Mammary epithelial cell (primary cell): ENCODE measurements at regions of chr6 and their contacts with region 1.

Region 1: GRCh38 chr6:40912158-40912946 is 126.7 kb downstream of the UNC5CL start:
- DNase-seq: peak; percentile 87
- H3K4me3 ChIP-seq: no peak overlapping the region
- H3K27ac ChIP-seq: no peak overlapping the region
- H3K4me1 ChIP-seq: peaks cover 20% of the 10 kb centered on the region
- H3K27me3 ChIP-seq: no peaks in the 10 kb centered on the region
- CTCF ChIP-seq: peak; percentile 59 to 75

Region 2: GRCh38 chr6:40509086-40509485 is 403.3 kb before region 1 on chr6:
- CTCF ChIA-PET with region 1: no interaction called
- dilution Hi-C with region 1: no loop called
- in situ Hi-C with region 1: no loop called
- intact Hi-C with region 1: no loop called
- DNase-seq: no peak
- H3K4me3 ChIP-seq: no peak overlapping the region
- H3K27ac ChIP-seq: no peak overlapping the region
- H3K4me1 ChIP-seq: no peaks in the 10 kb centered on the region
- H3K27me3 ChIP-seq: no peaks in the 10 kb centered on the region
- CTCF ChIP-seq: no peak

Region 3: DNA sequence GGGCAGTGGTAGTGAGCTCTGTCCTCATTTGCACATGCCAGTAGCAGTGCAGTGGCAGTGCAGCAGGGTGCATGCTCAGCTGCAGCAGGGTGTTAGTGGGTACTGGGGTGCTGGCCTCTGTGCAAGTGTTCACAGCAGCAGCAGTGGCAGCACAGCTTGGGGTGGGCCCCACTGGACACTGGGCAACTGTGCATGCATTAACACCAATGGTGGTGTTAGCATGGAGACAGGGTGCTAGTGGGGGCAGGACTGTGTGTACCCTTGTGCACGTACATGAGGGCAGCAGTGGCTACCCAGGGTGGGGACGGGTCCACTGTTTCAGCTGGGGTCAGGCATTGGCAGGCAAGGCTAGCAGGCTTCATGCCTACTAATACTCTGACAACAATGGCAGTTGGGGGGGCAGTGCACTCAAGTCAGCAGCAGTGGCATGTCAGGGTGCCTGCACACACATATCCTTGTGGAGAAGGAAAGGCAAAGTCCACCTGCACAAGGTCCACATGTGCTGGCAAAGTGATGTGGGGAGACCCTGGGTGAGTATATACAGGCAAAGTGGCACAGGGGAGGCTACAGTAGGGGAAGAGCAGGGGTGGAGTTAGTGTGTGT is 66.4 kb after region 1 on chr6:
- CTCF ChIA-PET with region 1: no interaction called
- dilution Hi-C with region 1: loop called (anchors 5 kb)
- in situ Hi-C with region 1: no loop called
- intact Hi-C with region 1: no loop called
- DNase-seq: no peak
- H3K4me3 ChIP-seq: no peak overlapping the region
- H3K27ac ChIP-seq: no peak overlapping the region
- H3K4me1 ChIP-seq: no peaks in the 10 kb centered on the region
- H3K27me3 ChIP-seq: no peaks in the 10 kb centered on the region
- CTCF ChIP-seq: no peak

Region 4: GRCh38 chr6:41008011-41008410 is 95.7 kb after region 1 on chr6:
- CTCF ChIA-PET with region 1: no interaction called
- dilution Hi-C with region 1: no loop called
- in situ Hi-C with region 1: no loop called
- intact Hi-C with region 1: loop called (anchors 5 kb)
- DNase-seq: no peak
- H3K4me3 ChIP-seq: no peak overlapping the region
- H3K27ac ChIP-seq: no peak overlapping the region
- H3K4me1 ChIP-seq: no peaks in the 10 kb centered on the region
- H3K27me3 ChIP-seq: no peaks in the 10 kb centered on the region
- CTCF ChIP-seq: no peak